ENCODE measurements at regions of chr5 and their contacts with region 1.

Region 1: GRCh38 chr5:73298772-73299630 is 126.0 kb downstream of the TMEM174 start:
- DNase-seq: no peak
- H3K4me3 ChIP-seq: peak overlapping the region; percentile 40
- H3K27me3 ChIP-seq: peaks cover 3% of the 10 kb centered on the region; the same call in 1 of the 2 replicates
- CTCF ChIP-seq: peak; percentile 10; the same call in 1 of the 2 replicates

Region 2: DNA sequence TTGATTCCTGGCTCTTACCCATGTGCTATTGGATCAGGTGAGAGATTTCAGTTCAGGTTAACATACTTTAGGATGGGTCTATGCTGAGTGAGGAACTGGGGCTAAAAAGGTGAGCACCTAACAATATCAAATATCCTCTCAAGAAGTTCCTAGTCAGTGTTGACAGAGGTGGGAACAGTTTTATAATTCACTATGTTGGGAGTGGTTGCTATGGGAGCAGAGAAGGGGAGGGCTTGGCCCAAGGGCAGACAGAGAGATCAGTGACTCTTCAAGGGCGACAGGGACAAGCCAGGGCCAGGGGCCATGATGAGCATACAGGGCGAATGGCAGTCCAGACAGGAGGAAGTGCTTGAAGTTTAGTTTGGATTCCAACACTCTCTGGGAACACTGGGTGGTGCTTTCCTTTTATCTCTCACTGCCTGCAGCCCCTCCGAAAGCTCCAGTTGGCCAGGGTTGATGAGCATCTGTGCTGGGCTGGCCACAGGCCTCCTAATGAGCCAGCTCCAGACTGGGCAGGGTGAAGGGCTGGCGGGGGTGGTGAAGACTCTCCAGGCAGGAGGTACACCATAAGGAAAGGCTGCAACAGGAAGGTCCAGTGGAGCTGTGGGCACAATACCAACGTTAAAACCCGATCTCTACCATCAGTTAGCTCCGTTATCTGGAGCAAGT is 14.7 kb before region 1 on chr5:
- CTCF ChIA-PET with region 1: interaction called, 12 read pairs
- POLR2A ChIA-PET with region 1: interaction called, 3 read pairs
- DNase-seq: no peak
- H3K4me3 ChIP-seq: no peak overlapping the region
- H3K27me3 ChIP-seq: no peaks in the 10 kb centered on the region; the same call in none of the 2 replicates
- CTCF ChIP-seq: no peak

Region 3: GRCh38 chr5:73312146-73312871 is 13.3 kb after region 1 on chr5:
- CTCF ChIA-PET with region 1: interaction called, 18 read pairs
- POLR2A ChIA-PET with region 1: no interaction called
- DNase-seq: no peak
- H3K4me3 ChIP-seq: no peak overlapping the region
- H3K27me3 ChIP-seq: no peaks in the 10 kb centered on the region
- CTCF ChIP-seq: peak; percentile 60

Region 4: GRCh38 chr5:73354406-73354805 is 55.4 kb after region 1 on chr5:
- CTCF ChIA-PET with region 1: no interaction called
- POLR2A ChIA-PET with region 1: no interaction called
- DNase-seq: no peak
- H3K4me3 ChIP-seq: no peak overlapping the region
- H3K27me3 ChIP-seq: no peaks in the 10 kb centered on the region; the same call in none of the 2 replicates
- CTCF ChIP-seq: no peak